OCI-LY7 (cell line): ENCODE measurements at regions of chr20 and their contacts with region 1.

Region 1: DNA sequence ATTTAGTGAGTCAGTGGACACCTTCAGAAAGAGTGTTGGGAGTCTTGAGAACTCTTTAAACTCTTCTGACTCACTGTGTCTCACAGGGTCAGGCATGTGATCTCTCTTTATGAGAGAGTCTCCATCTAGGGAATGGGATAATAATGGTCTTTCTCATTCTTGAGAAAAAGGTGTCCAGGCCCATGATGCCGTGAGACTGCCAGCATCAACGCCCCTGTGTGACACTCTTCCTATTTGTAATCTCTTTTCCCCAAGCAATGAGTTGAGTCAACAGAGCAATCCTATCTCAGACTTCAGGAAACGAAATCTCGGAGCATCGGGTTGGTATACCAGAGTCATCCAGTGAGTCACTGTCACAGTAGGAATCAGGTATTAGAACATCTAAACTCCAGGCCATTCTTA is 82.3 kb upstream of the BMP2 start:
- DNase-seq: no peak
- H3K4me3 ChIP-seq: no peak overlapping the region
- H3K27ac ChIP-seq: no peak overlapping the region
- H3K4me1 ChIP-seq: no peaks in the 10 kb centered on the region
- CTCF ChIP-seq: no peak

Region 2: GRCh38 chr20:6623989-6624388 is 61.2 kb before region 1 on chr20:
- CTCF ChIA-PET with region 1: no interaction called
- POLR2A ChIA-PET with region 1: no interaction called
- intact Hi-C with region 1: loop called (anchors 10 kb)
- DNase-seq: no peak
- H3K4me3 ChIP-seq: no peak overlapping the region
- H3K27ac ChIP-seq: no peak overlapping the region
- H3K4me1 ChIP-seq: no peaks in the 10 kb centered on the region
- CTCF ChIP-seq: no peak